ENCODE measurements at regions of chr2 and their contacts with region 1.

Region 1: GRCh38 chr2:213151437-213152064 is at the start of gene IKZF2:
- DNase-seq: peak; percentile 80
- ATAC-seq: peak; percentile 86
- H3K4me3 Mint-ChIP-seq: peak within 1 kb of the TSS; percentile 93
- H3K27ac Mint-ChIP-seq: peak within 1 kb of the TSS; percentile 95
- H3K4me1 Mint-ChIP-seq: peaks cover 40% of the 10 kb centered on the region
- H3K27me3 Mint-ChIP-seq: peaks cover 7% of the 10 kb centered on the region
- total RNA-seq, gene IKZF2: 29.7 to 30.8 TPM

Region 2: DNA sequence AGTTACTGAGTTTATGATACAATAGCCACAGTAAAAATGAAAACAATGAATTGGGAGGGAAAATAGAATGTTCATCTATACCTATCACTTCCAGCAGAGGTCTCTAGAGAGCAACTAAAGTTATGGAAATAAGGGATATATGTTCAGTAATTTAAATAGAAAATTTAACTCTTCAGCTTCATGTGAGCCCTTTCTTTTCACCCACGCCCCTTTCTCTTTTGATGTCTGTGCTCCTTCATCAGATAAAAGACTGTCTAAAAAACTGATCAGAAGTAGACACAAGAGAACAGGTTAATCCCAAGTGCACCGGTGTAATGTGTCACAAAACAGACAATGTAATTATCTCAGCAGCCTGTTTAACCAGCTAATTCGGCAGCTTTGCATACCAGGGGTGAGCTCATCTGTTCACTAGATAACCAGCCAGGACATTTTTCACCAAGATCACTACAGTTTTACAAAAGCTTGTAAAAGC is 374.5 kb before region 1 on chr2:
- CTCF ChIA-PET with region 1: interaction called, 30 read pairs
- POLR2A ChIA-PET with region 1: interaction called, 3 read pairs
- DNase-seq: peak; percentile 20
- ATAC-seq: no peak
- H3K4me3 Mint-ChIP-seq: no peak overlapping the region
- H3K27ac Mint-ChIP-seq: no peak overlapping the region
- H3K4me1 Mint-ChIP-seq: peaks cover 10% of the 10 kb centered on the region
- H3K27me3 Mint-ChIP-seq: no peaks in the 10 kb centered on the region

Region 3: GRCh38 chr2:212863185-212863588 is 288.4 kb before region 1 on chr2:
- CTCF ChIA-PET with region 1: interaction called, 17 read pairs
- POLR2A ChIA-PET with region 1: no interaction called
- DNase-seq: peak; percentile 48
- ATAC-seq: peak; percentile 42
- H3K4me3 Mint-ChIP-seq: no peak overlapping the region
- H3K27ac Mint-ChIP-seq: no peak overlapping the region
- H3K4me1 Mint-ChIP-seq: peaks cover 4% of the 10 kb centered on the region
- H3K27me3 Mint-ChIP-seq: no peaks in the 10 kb centered on the region

Region 4: GRCh38 chr2:213119061-213119856 is 32.3 kb before region 1 on chr2:
- CTCF ChIA-PET with region 1: interaction called, 16 read pairs
- POLR2A ChIA-PET with region 1: interaction called, 6 read pairs
- DNase-seq: peak; percentile 67
- ATAC-seq: peak; percentile 81
- H3K4me3 Mint-ChIP-seq: peak overlapping the region; percentile 64
- H3K27ac Mint-ChIP-seq: peak overlapping the region; percentile 95
- H3K4me1 Mint-ChIP-seq: peaks cover 76% of the 10 kb centered on the region
- H3K27me3 Mint-ChIP-seq: no peaks in the 10 kb centered on the region

Region 5: GRCh38 chr2:213125646-213126347 is 25.8 kb before region 1 on chr2:
- CTCF ChIA-PET with region 1: interaction called, 17 read pairs
- POLR2A ChIA-PET with region 1: interaction called, 5 read pairs
- DNase-seq: no peak
- ATAC-seq: peak; percentile 62
- H3K4me3 Mint-ChIP-seq: no peak overlapping the region
- H3K27ac Mint-ChIP-seq: no peak overlapping the region
- H3K4me1 Mint-ChIP-seq: peaks cover 70% of the 10 kb centered on the region
- H3K27me3 Mint-ChIP-seq: no peaks in the 10 kb centered on the region

Region 6: GRCh38 chr2:213216461-213216860 is 64.9 kb after region 1 on chr2:
- CTCF ChIA-PET with region 1: no interaction called
- POLR2A ChIA-PET with region 1: no interaction called
- DNase-seq: no peak
- ATAC-seq: no peak
- H3K4me3 Mint-ChIP-seq: no peak overlapping the region
- H3K27ac Mint-ChIP-seq: no peak overlapping the region
- H3K4me1 Mint-ChIP-seq: no peaks in the 10 kb centered on the region
- H3K27me3 Mint-ChIP-seq: no peaks in the 10 kb centered on the region

Region 7: GRCh38 chr2:213435052-213435451 is 283.5 kb after region 1 on chr2:
- CTCF ChIA-PET with region 1: no interaction called
- POLR2A ChIA-PET with region 1: no interaction called
- DNase-seq: no peak
- ATAC-seq: no peak
- H3K4me3 Mint-ChIP-seq: no peak overlapping the region
- H3K27ac Mint-ChIP-seq: no peak overlapping the region
- H3K4me1 Mint-ChIP-seq: no peaks in the 10 kb centered on the region
- H3K27me3 Mint-ChIP-seq: no peaks in the 10 kb centered on the region